Ascending aorta (tissue), 2 donors: ENCODE measurements at regions of chr12 and their contacts with region 1.

Region 1: GRCh38 chr12:65823513-65824375 is 539 bp upstream of the HMGA2 start:
- DNase-seq: peak in 1 of 2 donors; percentile 67
- H3K4me3 ChIP-seq: peak overlapping the region; percentile 64 to 82
- H3K27ac ChIP-seq: no peak overlapping the region
- H3K4me1 ChIP-seq: peaks cover 6 to 15% of the 10 kb centered on the region in 2 donors
- H3K27me3 ChIP-seq: no peaks in the 10 kb centered on the region
- CTCF ChIP-seq: no peak

Region 2: GRCh38 chr12:65609359-65609771 is 214.4 kb before region 1 on chr12:
- intact Hi-C with region 1: loop called (anchors 5 kb)
- DNase-seq: no peak
- H3K4me3 ChIP-seq: no peak overlapping the region
- H3K27ac ChIP-seq: no peak overlapping the region
- H3K4me1 ChIP-seq: no peaks in the 10 kb centered on the region
- H3K27me3 ChIP-seq: no peaks in the 10 kb centered on the region
- CTCF ChIP-seq: no peak

Region 3: DNA sequence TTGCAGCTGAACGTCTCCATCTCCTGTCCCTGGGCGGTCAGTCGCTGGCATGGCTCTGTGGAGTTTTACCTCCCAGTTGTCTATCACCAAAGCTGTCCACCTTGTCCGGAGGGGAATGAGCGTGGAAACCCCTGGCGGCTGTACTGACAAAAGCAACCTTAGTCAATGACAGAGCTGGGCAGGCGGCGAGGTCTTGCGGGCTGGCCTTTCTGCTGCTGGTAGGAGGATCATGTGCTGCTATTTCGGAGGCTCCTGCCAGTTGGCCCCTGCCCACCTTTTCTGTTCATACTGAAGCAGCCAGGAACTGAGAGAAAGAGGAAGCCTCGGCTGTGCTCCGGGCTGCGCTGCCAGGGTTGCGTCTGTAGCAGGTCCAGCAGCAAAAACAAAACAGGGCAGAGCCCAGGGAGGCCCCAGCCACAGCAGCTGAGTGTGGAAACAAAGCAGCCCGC is 58.2 kb after region 1 on chr12:
- intact Hi-C with region 1: loop called (anchors 5 kb)
- DNase-seq: peak; percentile 33 to 85
- H3K4me3 ChIP-seq: peak overlapping the region; percentile 50 to 51
- H3K27ac ChIP-seq: peak overlapping the region; percentile 2 to 56
- H3K4me1 ChIP-seq: peaks cover 5 to 13% of the 10 kb centered on the region in 2 donors
- H3K27me3 ChIP-seq: no peaks in the 10 kb centered on the region
- CTCF ChIP-seq: peak in 1 of 3 experiments; percentile 14

Region 4: GRCh38 chr12:66087365-66087943 is 263.7 kb after region 1 on chr12:
- intact Hi-C with region 1: loop called (anchors 10 kb)
- DNase-seq: peak in 1 of 2 donors; percentile 79
- H3K4me3 ChIP-seq: no peak overlapping the region
- H3K27ac ChIP-seq: no peak overlapping the region
- H3K4me1 ChIP-seq: peaks cover 0 to 5% of the 10 kb centered on the region in 2 donors
- H3K27me3 ChIP-seq: no peaks in the 10 kb centered on the region
- CTCF ChIP-seq: peak; percentile 51 to 79 (median 63)